CD8-positive, alpha-beta T cell (primary cell): ENCODE measurements at regions of chr4 and their contacts with region 1.

Region 1: DNA sequence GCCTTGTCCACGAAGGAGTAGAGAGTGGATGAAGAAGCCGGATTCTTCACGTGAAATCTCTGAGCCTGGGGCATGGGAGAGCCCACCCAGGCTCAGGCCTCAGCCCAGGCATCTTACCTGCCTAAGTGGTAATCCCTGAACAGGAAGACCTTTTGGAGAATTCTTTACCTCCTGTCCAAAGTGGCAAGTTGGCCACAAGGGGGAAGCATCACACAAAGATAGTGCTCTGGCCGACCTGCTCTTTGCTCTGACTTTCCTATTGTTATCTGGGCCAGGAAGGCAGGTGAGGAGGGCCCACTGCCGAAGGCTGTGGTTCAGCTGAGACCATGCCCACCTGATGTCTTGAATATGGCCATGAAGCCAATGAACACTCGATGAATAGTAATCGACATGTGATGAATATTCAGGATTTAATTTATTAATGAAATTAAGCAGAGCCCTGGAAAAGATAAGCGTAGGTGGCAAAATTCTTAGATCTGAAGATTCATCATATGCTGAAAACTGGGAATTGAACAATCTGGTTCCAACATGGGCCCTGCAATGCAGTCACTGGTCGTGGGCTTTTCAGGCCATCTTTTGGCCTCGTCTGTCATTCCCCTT is 93.8 kb downstream of the PDGFRA start:
- DNase-seq: peak in 7 of 9 experiments; percentile 3 to 58 (median 42)
- ATAC-seq: peak; percentile 40
- H3K4me3 ChIP-seq: no peak overlapping the region
- H3K4me3 Mint-ChIP-seq: no peak overlapping the region
- H3K27ac ChIP-seq: no peak overlapping the region
- H3K27ac Mint-ChIP-seq: no peak overlapping the region
- H3K4me1 ChIP-seq: no peaks in the 10 kb centered on the region
- H3K4me1 Mint-ChIP-seq: no peaks in the 10 kb centered on the region
- H3K27me3 ChIP-seq: no peaks in the 10 kb centered on the region
- H3K27me3 Mint-ChIP-seq: no peaks in the 10 kb centered on the region
- CTCF ChIP-seq: peak; percentile 39

Region 2: GRCh38 chr4:53039741-53040458 is 1283.0 kb before region 1 on chr4:
- CTCF ChIA-PET with region 1: no interaction called
- POLR2A ChIA-PET with region 1: no interaction called
- intact Hi-C with region 1: no loop called
- DNase-seq: no peak
- ATAC-seq: no peak
- H3K4me3 ChIP-seq: no peak overlapping the region
- H3K4me3 Mint-ChIP-seq: no peak overlapping the region
- H3K27ac ChIP-seq: no peak overlapping the region
- H3K27ac Mint-ChIP-seq: no peak overlapping the region
- H3K4me1 ChIP-seq: no peaks in the 10 kb centered on the region
- H3K4me1 Mint-ChIP-seq: no peaks in the 10 kb centered on the region
- H3K27me3 ChIP-seq: no peaks in the 10 kb centered on the region
- H3K27me3 Mint-ChIP-seq: no peaks in the 10 kb centered on the region
- CTCF ChIP-seq: no peak

Region 3: DNA sequence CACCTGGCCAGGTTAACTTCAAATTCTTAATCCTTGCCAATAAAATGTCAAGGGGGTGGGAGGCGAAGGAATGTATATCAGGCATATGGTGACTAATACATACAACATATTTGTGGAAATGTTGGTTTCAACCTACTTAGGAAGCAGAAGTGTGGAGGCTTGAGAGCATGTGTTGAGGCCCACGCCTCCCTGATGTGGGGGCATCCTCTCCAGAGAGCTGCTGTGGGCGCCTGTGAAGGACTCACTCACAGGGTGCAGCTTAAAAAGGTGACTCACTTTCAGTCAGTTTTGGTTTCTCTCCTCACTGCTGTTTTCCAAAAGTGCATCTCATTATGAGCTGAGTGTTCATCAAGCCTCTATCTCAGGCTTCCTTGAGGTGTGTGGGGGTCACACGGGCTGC is 759.1 kb before region 1 on chr4:
- CTCF ChIA-PET with region 1: no interaction called
- POLR2A ChIA-PET with region 1: no interaction called
- intact Hi-C with region 1: no loop called
- DNase-seq: no peak
- ATAC-seq: no peak
- H3K4me3 ChIP-seq: no peak overlapping the region
- H3K4me3 Mint-ChIP-seq: no peak overlapping the region
- H3K27ac ChIP-seq: no peak overlapping the region
- H3K27ac Mint-ChIP-seq: no peak overlapping the region
- H3K4me1 ChIP-seq: no peaks in the 10 kb centered on the region
- H3K4me1 Mint-ChIP-seq: no peaks in the 10 kb centered on the region
- H3K27me3 ChIP-seq: no peaks in the 10 kb centered on the region
- H3K27me3 Mint-ChIP-seq: no peaks in the 10 kb centered on the region
- CTCF ChIP-seq: no peak

Region 4: GRCh38 chr4:54400802-54401201 is 77.9 kb after region 1 on chr4:
- CTCF ChIA-PET with region 1: no interaction called
- POLR2A ChIA-PET with region 1: no interaction called
- intact Hi-C with region 1: no loop called
- DNase-seq: no peak
- ATAC-seq: no peak
- H3K4me3 ChIP-seq: no peak overlapping the region
- H3K4me3 Mint-ChIP-seq: no peak overlapping the region
- H3K27ac ChIP-seq: no peak overlapping the region
- H3K27ac Mint-ChIP-seq: no peak overlapping the region
- H3K4me1 ChIP-seq: no peaks in the 10 kb centered on the region
- H3K4me1 Mint-ChIP-seq: no peaks in the 10 kb centered on the region
- H3K27me3 ChIP-seq: no peaks in the 10 kb centered on the region
- H3K27me3 Mint-ChIP-seq: peaks cover 3% of the 10 kb centered on the region
- CTCF ChIP-seq: no peak

Region 5: GRCh38 chr4:54547299-54548097 is 224.6 kb after region 1 on chr4:
- CTCF ChIA-PET with region 1: no interaction called
- POLR2A ChIA-PET with region 1: no interaction called
- intact Hi-C with region 1: no loop called
- DNase-seq: no peak
- ATAC-seq: no peak
- H3K4me3 ChIP-seq: no peak overlapping the region
- H3K4me3 Mint-ChIP-seq: no peak overlapping the region
- H3K27ac ChIP-seq: no peak overlapping the region
- H3K27ac Mint-ChIP-seq: no peak overlapping the region
- H3K4me1 ChIP-seq: no peaks in the 10 kb centered on the region
- H3K4me1 Mint-ChIP-seq: no peaks in the 10 kb centered on the region
- H3K27me3 ChIP-seq: no peaks in the 10 kb centered on the region
- H3K27me3 Mint-ChIP-seq: peaks cover 7% of the 10 kb centered on the region
- CTCF ChIP-seq: no peak

Region 6: DNA sequence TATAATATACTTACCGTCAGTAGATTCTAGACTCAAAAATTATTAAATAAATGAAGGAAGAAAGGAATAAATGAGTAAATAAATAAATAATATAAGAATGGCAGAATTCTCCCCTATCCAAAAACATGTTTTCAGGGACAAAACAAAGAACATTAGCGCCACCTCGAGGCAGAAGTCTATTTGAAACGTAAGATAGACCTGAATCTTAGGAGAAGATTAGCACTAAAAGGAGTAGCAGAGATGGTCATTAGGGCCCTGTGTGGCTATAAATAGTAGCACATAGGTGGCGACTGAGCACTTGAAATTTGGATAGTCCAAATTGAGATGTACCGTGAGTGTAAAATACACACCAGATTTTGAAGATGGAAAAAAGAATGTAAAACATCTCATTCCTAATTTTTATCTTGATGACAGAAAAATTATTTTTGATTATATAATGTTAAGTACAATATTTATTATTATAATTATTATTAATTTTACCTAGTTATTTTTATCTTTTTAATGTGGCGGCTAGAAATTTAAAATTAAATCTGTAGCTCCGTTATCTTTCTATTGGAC is 998.9 kb after region 1 on chr4:
- CTCF ChIA-PET with region 1: no interaction called
- POLR2A ChIA-PET with region 1: no interaction called
- intact Hi-C with region 1: loop called in 1 of 2 experiments (anchors 2 kb)
- DNase-seq: peak in 4 of 9 experiments; percentile 24 to 43 (median 37)
- ATAC-seq: no peak
- H3K4me3 ChIP-seq: no peak overlapping the region
- H3K4me3 Mint-ChIP-seq: no peak overlapping the region
- H3K27ac ChIP-seq: no peak overlapping the region
- H3K27ac Mint-ChIP-seq: no peak overlapping the region
- H3K4me1 ChIP-seq: peaks cover 9% of the 10 kb centered on the region
- H3K4me1 Mint-ChIP-seq: peaks cover 15% of the 10 kb centered on the region
- H3K27me3 ChIP-seq: no peaks in the 10 kb centered on the region
- H3K27me3 Mint-ChIP-seq: peaks cover 6% of the 10 kb centered on the region
- CTCF ChIP-seq: peak; percentile 47